Left ventricle myocardium superior (tissue), 1 donor: ENCODE measurements at regions of chr2 and their contacts with region 1.

Region 1: DNA sequence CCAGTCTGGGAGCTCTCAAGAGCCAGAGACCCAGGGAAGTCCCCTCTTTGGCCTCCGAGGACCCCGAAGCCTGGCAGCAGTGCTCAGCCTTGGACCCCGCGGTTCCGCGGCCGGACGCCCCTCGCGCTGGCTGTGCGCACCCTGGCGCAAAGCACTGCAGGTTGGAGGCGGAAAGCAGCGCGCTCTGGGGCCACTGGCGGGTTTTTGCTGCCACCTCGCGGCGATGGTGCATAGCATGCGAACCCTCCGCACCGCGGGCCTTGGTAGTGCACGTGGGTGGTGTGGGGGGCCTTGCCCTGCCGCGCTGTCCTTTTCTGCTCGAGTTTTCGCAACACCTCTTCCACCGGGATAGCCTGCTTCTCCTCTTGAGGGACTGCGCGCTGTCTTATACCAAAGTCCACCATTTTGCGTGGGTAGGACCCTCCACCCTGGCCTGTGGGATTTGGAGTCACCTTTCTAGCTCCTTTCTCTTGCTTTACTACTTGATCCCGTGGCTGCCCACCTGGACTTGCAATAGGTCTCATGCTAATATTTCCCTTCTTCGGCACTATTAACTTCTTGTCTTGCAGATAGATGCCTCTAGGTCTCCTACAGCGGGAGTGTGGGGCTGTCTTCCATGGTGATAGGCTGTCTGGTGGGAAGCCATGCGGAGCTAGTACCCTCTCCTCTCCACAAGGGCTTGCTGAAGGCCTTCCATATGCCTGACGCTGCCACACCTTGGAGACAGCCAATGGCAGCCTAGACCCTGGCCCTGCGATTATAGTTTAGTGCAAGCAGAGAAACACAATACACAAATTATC is 14.3 kb downstream of the SIX3 start:
- DNase-seq: peak; percentile 83
- ATAC-seq: peak; percentile 85

Region 2: GRCh38 chr2:44361330-44362206 is 594.2 kb before region 1 on chr2 and contains the starts of genes CAMKMT and PREPL:
- intact Hi-C with region 1: no loop called
- DNase-seq: peak; percentile 98
- ATAC-seq: peak; percentile 97
- total RNA-seq, gene CAMKMT: 3.3 TPM
- total RNA-seq, gene PREPL: 81.9 TPM

Region 3: GRCh38 chr2:44392338-44392943 is 563.4 kb before region 1 on chr2:
- intact Hi-C with region 1: loop called (anchors 10 kb)
- DNase-seq: no peak
- ATAC-seq: no peak

Region 4: GRCh38 chr2:44479122-44479887 is 476.5 kb before region 1 on chr2:
- intact Hi-C with region 1: loop called (anchors 5 kb)
- DNase-seq: no peak
- ATAC-seq: peak; percentile 91

Region 5: GRCh38 chr2:44941551-44942234 is 14.1 kb before region 1 on chr2 and contains the start of gene SIX3:
- intact Hi-C with region 1: no loop called
- DNase-seq: no peak
- ATAC-seq: no peak
- total RNA-seq, gene SIX3: not detected

Region 6: GRCh38 chr2:45009303-45009927 is 53.6 kb after region 1 on chr2 and contains the start of gene SIX2:
- intact Hi-C with region 1: no loop called
- DNase-seq: peak; percentile 94
- ATAC-seq: peak; percentile 90
- total RNA-seq, gene SIX2: 0.40 TPM